Left ventricle myocardium inferior (tissue), 1 donor: ENCODE measurements at regions of chr13 and their contacts with region 1.

Region 1: GRCh38 chr13:102596147-102597028 is at the start of gene TPP2:
- DNase-seq: peak; percentile 100
- H3K4me3 ChIP-seq: peak within 1 kb of the TSS; percentile 92
- H3K27ac ChIP-seq: peak within 1 kb of the TSS; percentile 96
- H3K4me1 ChIP-seq: peaks cover 70% of the 10 kb centered on the region
- H3K27me3 ChIP-seq: no peaks in the 10 kb centered on the region
- CTCF ChIP-seq: no peak
- total RNA-seq, gene TPP2: 29.0 TPM

Region 2: GRCh38 chr13:102670130-102670529 is 73.7 kb after region 1 on chr13:
- intact Hi-C with region 1: loop called (anchors 2 kb)
- DNase-seq: no peak
- H3K4me3 ChIP-seq: no peak overlapping the region
- H3K27ac ChIP-seq: no peak overlapping the region
- H3K4me1 ChIP-seq: no peaks in the 10 kb centered on the region
- H3K27me3 ChIP-seq: no peaks in the 10 kb centered on the region
- CTCF ChIP-seq: no peak

Region 3: GRCh38 chr13:102707465-102707864 is 111.1 kb after region 1 on chr13:
- intact Hi-C with region 1: no loop called
- DNase-seq: no peak
- H3K4me3 ChIP-seq: no peak overlapping the region
- H3K27ac ChIP-seq: no peak overlapping the region
- H3K4me1 ChIP-seq: peaks cover 8% of the 10 kb centered on the region
- H3K27me3 ChIP-seq: no peaks in the 10 kb centered on the region
- CTCF ChIP-seq: no peak

Region 4: GRCh38 chr13:102798581-102799425 is 202.4 kb after region 1 on chr13 and contains the starts of genes BIVM and POGLUT2:
- intact Hi-C with region 1: loop called (anchors 10 kb)
- DNase-seq: peak; percentile 90
- H3K4me3 ChIP-seq: peak within 1 kb of the TSS; percentile 92
- H3K27ac ChIP-seq: peak within 1 kb of the TSS; percentile 95
- H3K4me1 ChIP-seq: peaks cover 61% of the 10 kb centered on the region
- H3K27me3 ChIP-seq: no peaks in the 10 kb centered on the region
- CTCF ChIP-seq: no peak
- total RNA-seq, gene BIVM: 37.5 TPM
- total RNA-seq, gene POGLUT2: 3.4 TPM

Region 5: DNA sequence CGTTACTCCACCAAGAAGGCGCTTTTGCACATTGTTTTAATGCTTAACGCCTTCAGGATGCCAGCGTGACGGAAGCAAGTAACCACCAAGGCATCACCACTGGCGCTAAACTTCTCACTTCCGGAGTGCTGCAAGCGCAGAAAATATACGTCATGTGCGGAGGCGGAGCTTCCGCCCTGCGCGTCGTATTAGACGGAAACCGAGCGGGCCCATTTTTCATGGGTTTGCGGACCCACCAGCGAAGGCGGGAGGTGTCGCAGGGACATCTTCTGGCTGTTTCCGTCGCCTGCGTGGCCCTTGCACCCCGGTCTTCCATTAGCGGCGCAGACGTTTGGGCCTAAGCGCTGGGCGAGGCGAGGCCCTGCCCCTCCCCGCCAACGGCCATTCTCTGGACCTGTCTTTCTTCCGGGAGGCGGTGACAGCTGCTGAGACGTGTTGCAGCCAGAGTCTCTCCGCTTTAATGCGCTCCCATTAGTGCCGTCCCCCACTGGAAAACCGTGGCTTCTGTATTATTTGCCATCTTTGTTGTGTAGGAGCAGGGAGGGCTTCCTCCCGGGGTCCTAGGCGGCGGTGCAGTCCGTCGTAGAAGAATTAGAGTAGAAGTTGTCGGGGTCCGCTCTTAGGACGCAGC is 249.4 kb after region 1 on chr13 and contains the start of gene ERCC5:
- intact Hi-C with region 1: loop called (anchors 5 kb)
- DNase-seq: peak; percentile 92
- H3K4me3 ChIP-seq: peak within 1 kb of the TSS; percentile 85
- H3K27ac ChIP-seq: peak within 1 kb of the TSS; percentile 97
- H3K4me1 ChIP-seq: peaks cover 46% of the 10 kb centered on the region
- H3K27me3 ChIP-seq: no peaks in the 10 kb centered on the region
- CTCF ChIP-seq: no peak
- total RNA-seq, gene ERCC5: 30.4 TPM